ENCODE measurements at regions of chr1 and their contacts with region 1.

Region 1: DNA sequence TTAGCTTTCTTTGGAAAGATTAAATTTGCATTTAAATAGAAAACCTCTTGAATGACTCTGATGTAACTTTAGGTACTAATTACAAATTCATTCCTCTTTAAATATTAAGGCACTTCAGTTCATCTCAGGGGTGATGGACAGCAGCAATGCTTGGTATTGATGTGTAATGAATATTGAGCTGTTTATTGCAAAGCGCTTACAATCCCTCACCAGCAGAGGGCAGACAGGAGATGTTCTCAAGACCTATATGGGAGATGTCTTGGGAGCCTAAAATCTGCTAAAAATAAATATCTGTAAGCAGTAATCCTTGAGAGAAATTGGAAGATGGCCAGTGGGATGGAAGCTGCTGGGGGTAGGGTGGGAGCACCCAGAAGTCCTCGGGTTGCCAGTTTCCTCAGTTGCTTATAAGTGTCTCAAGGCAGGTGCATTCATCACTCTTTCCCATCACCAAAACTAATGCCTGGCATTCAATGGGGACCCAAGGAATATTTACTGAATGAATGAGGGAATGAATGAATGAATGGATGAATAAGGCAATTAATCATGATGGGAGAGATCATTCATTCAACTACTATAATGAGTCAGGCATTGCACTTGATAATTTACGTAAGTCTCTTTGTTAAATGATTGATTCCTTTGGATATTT is 2.3 kb downstream of the KLHDC8A start:
- DNase-seq: peak; percentile 43
- ATAC-seq: peak; percentile 82
- H3K4me3 ChIP-seq: no peak overlapping the region
- H3K27ac ChIP-seq: no peak overlapping the region
- H3K4me1 ChIP-seq: no peaks in the 10 kb centered on the region
- H3K27me3 ChIP-seq: no peaks in the 10 kb centered on the region
- CTCF ChIP-seq: peak; percentile 89

Region 2: DNA sequence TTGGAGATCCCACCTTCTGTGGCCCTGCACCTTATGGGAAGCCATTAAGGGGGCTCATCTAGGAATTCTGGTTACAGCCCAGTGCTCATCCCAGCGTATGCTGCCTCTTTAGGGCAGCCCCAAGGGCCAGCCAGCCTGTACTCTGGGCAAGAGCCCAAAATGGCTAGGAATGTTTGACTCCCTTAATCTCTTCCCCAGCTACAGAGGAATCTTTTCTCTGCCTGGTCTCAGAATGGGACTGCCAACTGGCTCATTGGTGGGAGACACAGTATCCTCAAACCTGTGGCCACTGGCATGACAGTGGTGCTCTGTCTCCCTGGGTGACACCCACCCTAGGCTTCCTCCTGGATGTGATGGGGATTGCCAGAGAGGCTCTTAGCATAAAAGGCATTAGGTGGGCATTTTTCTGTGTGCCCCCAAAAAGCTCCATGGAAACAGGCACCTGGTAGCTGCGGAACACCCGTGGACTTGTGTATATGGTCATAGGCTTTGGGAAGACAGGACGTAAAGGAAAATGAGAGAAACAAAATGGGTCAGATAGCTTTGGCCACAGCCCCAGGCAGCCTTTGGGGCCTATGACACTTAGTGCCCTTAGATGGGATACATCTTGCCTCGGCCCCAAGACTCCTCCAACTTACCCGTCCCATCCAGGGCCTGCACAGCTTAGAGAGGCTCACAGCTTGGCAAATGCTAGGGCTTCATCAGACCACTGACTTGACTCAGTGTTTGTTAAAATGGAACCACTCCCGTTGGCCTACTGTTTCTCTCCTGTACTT is 277.0 kb before region 1 on chr1:
- CTCF ChIA-PET with region 1: no interaction called
- POLR2A ChIA-PET with region 1: no interaction called
- in situ Hi-C with region 1: no loop called
- intact Hi-C with region 1: no loop called
- DNase-seq: no peak
- ATAC-seq: no peak
- H3K4me3 ChIP-seq: no peak overlapping the region
- H3K27ac ChIP-seq: no peak overlapping the region
- H3K4me1 ChIP-seq: no peaks in the 10 kb centered on the region
- H3K27me3 ChIP-seq: no peaks in the 10 kb centered on the region
- CTCF ChIP-seq: no peak

Region 3: DNA sequence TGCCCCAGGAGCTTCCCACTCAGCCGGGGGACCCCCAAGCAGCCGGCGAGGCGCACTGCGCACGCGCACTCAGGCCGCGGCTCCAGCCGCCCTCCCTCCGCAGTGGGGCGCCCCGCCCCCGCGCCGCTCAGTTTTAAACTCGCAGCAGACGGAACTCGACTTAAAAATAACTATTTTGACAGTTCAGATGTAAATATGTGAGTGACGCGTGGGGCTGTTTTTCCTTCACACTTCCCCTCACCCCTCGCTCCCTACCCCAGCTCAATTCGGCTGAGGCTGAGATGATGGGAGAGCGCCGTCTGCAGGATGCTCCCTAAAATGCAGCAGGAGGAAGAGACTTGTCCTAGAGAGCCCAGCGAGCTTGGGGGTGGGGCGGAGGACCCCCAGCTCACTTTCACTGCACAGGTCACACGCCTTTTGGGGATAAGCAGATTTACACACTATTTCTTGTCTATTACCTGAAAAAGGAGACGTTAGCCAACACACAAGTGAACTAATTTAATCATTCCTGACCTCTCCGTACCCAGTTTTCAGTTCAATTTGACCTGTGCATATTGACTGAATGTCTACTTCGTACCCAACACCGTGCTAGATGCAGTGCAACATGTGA is 76.4 kb after region 1 on chr1:
- CTCF ChIA-PET with region 1: interaction called, 11 read pairs
- POLR2A ChIA-PET with region 1: no interaction called
- in situ Hi-C with region 1: no loop called
- intact Hi-C with region 1: no loop called
- DNase-seq: peak; percentile 20
- ATAC-seq: peak; percentile 79
- H3K4me3 ChIP-seq: peak overlapping the region; percentile 48 to 64
- H3K27ac ChIP-seq: no peak overlapping the region
- H3K4me1 ChIP-seq: peaks cover 4% of the 10 kb centered on the region; the same call in 1 of the 2 replicates
- H3K27me3 ChIP-seq: peaks cover 3% of the 10 kb centered on the region
- CTCF ChIP-seq: peak; percentile 96

Region 4: DNA sequence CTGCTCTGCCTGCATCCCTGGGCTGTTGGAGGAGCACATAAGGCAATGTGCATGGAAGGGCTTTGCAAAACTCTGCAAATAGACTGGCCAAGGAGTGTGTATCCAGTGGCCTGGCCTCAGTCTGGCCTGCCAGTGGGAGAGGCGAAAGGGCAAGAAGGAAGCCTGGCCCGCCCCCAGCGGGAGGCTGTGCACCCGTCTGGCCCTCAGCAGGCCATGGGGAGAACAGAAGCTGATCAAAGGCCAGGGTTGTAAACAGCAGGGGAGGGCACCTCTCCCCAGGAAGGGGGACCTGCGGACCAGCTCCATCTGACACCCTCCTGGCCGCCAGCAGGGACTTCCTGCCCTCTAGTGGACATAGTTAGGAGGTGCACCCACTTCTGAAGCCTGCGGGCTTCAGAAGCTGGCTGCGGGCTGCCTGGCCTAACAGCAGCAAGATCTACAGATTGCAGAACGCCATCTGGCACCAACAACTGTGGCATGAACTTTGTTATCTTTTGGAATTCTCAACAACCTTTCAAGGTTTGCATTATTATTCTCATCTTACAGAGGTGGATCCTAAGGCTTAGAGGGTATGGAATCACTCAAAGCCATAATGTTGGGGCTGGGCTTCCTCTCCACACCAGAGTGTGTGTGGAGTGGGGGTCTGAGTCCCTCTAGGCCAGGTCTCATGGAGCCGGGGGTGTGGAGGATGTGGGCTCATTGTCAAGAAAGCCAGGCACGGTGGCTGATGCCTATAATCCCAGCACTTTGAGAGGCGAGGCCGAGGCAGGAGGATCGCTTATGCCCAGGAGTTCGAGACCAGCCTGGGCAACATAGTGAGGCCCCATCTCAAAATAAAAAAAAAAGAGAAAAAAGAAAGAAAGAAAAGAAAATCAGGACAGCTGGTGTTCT is 131.2 kb after region 1 on chr1:
- CTCF ChIA-PET with region 1: interaction called, 29 read pairs
- POLR2A ChIA-PET with region 1: no interaction called
- in situ Hi-C with region 1: no loop called
- intact Hi-C with region 1: loop called (anchors 2 kb)
- DNase-seq: no peak
- ATAC-seq: peak; percentile 84
- H3K4me3 ChIP-seq: no peak overlapping the region
- H3K27ac ChIP-seq: no peak overlapping the region
- H3K4me1 ChIP-seq: peaks cover 10% of the 10 kb centered on the region
- H3K27me3 ChIP-seq: no peaks in the 10 kb centered on the region
- CTCF ChIP-seq: peak; percentile 98